A549 (cell line): ENCODE measurements at regions of chr14 and their contacts with region 1.

Region 1: GRCh38 chr14:105490572-105491366 is at the start of gene TEDC1:
- DNase-seq: peak; percentile 96 to 100
- ATAC-seq: peak; percentile 60 to 77
- H3K4me3 ChIP-seq: peak within 1 kb of the TSS; percentile 74
- H3K27ac ChIP-seq: peak within 1 kb of the TSS; percentile 84 to 99
- H3K4me1 ChIP-seq: peaks cover 36% of the 10 kb centered on the region
- CTCF ChIP-seq: peak; percentile 95
- EP300 ChIP-seq: no peak
- POLR2A ChIP-seq: no peak; the same call in none of the 2 replicates
- RAD21 ChIP-seq: peak; percentile 50 to 89; a peak in 4 of 5 replicates
- polyA plus RNA-seq, gene TEDC1: 12.7 and 13.4 TPM in 2 replicates

Region 2: GRCh38 chr14:104941508-104942365 is 549.0 kb before region 1 on chr14:
- CTCF ChIA-PET with region 1: no interaction called
- POLR2A ChIA-PET with region 1: no interaction called
- DNase-seq: no peak
- ATAC-seq: no peak
- H3K4me3 ChIP-seq: no peak overlapping the region
- H3K27ac ChIP-seq: no peak overlapping the region
- H3K4me1 ChIP-seq: no peaks in the 10 kb centered on the region
- CTCF ChIP-seq: no peak
- EP300 ChIP-seq: no peak
- POLR2A ChIP-seq: no peak
- RAD21 ChIP-seq: no peak

Region 3: GRCh38 chr14:105374383-105374782 is 116.4 kb before region 1 on chr14:
- CTCF ChIA-PET with region 1: interaction called, 30 read pairs
- POLR2A ChIA-PET with region 1: interaction called, 6 read pairs
- DNase-seq: no peak
- ATAC-seq: 0 out of 6 replicates have a peak, but pooled peaks of 1 of the 2 experiments have one; percentile 12
- H3K4me3 ChIP-seq: no peak overlapping the region
- H3K27ac ChIP-seq: no peak overlapping the region
- H3K4me1 ChIP-seq: no peaks in the 10 kb centered on the region
- CTCF ChIP-seq: no peak
- EP300 ChIP-seq: no peak
- POLR2A ChIP-seq: no peak
- RAD21 ChIP-seq: no peak

Region 4: GRCh38 chr14:105439691-105440553 is 50.8 kb before region 1 on chr14:
- CTCF ChIA-PET with region 1: interaction called, 17 read pairs
- POLR2A ChIA-PET with region 1: interaction called, 4 read pairs
- DNase-seq: peak; percentile 45 to 60
- ATAC-seq: peak; percentile 54 to 85; a peak in 5 of 6 replicates
- H3K4me3 ChIP-seq: no peak overlapping the region
- H3K27ac ChIP-seq: no peak overlapping the region
- H3K4me1 ChIP-seq: no peaks in the 10 kb centered on the region
- CTCF ChIP-seq: peak; percentile 46
- EP300 ChIP-seq: no peak
- POLR2A ChIP-seq: no peak
- RAD21 ChIP-seq: peak; percentile 23 to 36; a peak in 2 of 5 replicates

Region 5: GRCh38 chr14:105473677-105474482 is 16.9 kb before region 1 on chr14:
- CTCF ChIA-PET with region 1: interaction called, 132 read pairs
- POLR2A ChIA-PET with region 1: interaction called, 7 read pairs
- DNase-seq: peak; percentile 89 to 92
- ATAC-seq: peak; percentile 59 to 83
- H3K4me3 ChIP-seq: peak overlapping the region; percentile 82
- H3K27ac ChIP-seq: peak overlapping the region; percentile 84 to 97
- H3K4me1 ChIP-seq: peaks cover 58% of the 10 kb centered on the region
- CTCF ChIP-seq: no peak
- EP300 ChIP-seq: no peak; a peak in 1 of 5 replicates
- POLR2A ChIP-seq: no peak
- RAD21 ChIP-seq: no peak

Region 6: DNA sequence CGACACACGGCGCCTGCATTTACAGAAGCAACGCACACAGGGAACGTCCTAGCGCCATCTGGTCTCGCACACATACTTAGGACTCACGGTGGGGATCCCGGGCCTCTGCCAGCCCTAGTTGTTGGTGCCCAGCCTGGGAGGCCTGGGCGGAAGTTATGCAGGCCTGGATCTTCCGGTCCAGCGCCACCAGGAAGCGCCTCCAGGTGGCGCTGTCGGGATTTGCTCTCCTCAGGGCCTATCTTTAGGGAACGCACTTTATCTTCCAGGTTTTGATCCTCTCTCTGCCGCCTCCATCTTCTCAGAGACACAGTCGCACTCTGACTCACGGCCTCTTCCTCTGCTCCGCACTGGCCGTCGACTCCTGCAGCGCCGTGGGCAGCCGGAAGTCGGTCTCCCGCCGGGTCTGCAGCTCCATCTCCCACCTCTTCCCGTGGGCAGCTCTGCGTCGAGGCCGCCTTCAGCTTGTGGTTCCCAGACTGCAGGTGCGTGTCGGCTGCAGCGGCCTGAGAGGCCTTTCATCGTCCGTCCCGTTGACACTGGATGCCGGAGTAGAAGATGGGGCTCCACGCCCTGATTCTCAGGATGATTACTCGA is 796.0 kb after region 1 on chr14:
- CTCF ChIA-PET with region 1: no interaction called
- POLR2A ChIA-PET with region 1: no interaction called
- DNase-seq: peak in 1 of 2 experiments; percentile 7
- ATAC-seq: peak in 1 of 2 experiments; percentile 72; a peak in 3 of 6 replicates
- H3K4me3 ChIP-seq: no peak overlapping the region
- H3K27ac ChIP-seq: no peak overlapping the region
- H3K4me1 ChIP-seq: no peaks in the 10 kb centered on the region
- CTCF ChIP-seq: 0 out of 3 replicates have a peak, but pooled peaks have one; percentile 7
- EP300 ChIP-seq: no peak
- POLR2A ChIP-seq: no peak
- RAD21 ChIP-seq: no peak